A673 (cell line): ENCODE measurements at regions of chr14 and their contacts with region 1.

Region 1: DNA sequence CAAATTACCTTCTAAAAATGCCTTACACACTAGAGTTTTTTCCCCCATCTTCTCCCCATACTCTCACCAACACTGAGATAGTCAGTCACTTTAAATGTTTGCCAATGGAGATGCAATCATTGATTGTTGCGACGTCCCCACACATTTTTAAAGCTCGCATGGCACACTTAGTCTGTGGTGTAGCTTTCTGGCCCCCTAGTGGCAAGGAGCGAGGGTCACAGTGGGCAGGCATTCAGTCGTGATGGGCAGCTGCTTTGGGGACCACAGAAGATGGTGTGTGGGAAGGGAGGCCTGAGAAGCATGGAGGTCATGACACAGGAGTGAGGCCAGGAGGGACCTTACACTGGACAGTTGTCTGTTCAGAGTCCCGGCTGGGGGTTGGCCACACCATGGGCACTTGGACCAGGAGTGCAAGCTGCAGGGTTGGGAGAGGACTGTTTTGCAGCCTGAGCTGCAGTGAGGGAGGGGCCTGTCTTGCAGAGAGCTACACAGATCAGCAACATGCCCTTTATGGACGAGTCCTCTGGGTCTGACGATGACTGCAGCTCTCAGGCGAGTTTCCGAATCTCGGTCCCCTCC is 28.7 kb downstream of the PIGH start:
- DNase-seq: peak; percentile 65
- H3K4me3 ChIP-seq: no peak overlapping the region
- H3K27ac ChIP-seq: no peak overlapping the region
- H3K4me1 ChIP-seq: no peaks in the 10 kb centered on the region
- H3K27me3 ChIP-seq: no peaks in the 10 kb centered on the region
- CTCF ChIP-seq: peak; percentile 95

Region 2: DNA sequence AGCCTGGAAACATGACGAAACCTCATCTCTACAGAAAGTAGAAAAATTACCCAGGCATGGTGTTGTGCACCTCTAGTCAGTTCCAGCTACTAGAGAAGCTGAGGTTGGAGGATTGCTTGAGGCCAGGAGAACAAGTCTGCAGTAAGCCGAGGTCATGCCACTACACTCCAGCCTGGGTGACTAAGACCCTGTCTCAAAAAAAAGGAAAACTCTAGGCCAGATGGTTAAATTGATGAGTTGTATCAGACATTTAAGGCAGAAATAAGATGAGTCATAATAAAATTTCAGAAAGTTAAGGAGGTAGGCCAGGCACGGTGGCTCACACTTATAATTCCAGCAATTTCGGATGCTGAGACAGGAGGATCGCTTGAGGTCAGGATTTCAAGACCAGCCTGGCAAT is 200.5 kb before region 1 on chr14:
- CTCF ChIA-PET with region 1: no interaction called
- POLR2A ChIA-PET with region 1: no interaction called
- intact Hi-C with region 1: no loop called
- DNase-seq: no peak
- H3K4me3 ChIP-seq: no peak overlapping the region
- H3K27ac ChIP-seq: no peak overlapping the region
- H3K4me1 ChIP-seq: no peaks in the 10 kb centered on the region
- H3K27me3 ChIP-seq: no peaks in the 10 kb centered on the region
- CTCF ChIP-seq: no peak

Region 3: GRCh38 chr14:67426983-67427606 is 144.3 kb before region 1 on chr14:
- CTCF ChIA-PET with region 1: interaction called, 16 read pairs
- POLR2A ChIA-PET with region 1: no interaction called
- intact Hi-C with region 1: loop called (anchors 1 kb)
- DNase-seq: peak; percentile 87
- H3K4me3 ChIP-seq: no peak overlapping the region
- H3K27ac ChIP-seq: no peak overlapping the region
- H3K4me1 ChIP-seq: no peaks in the 10 kb centered on the region
- H3K27me3 ChIP-seq: no peaks in the 10 kb centered on the region
- CTCF ChIP-seq: peak; percentile 81

Region 4: DNA sequence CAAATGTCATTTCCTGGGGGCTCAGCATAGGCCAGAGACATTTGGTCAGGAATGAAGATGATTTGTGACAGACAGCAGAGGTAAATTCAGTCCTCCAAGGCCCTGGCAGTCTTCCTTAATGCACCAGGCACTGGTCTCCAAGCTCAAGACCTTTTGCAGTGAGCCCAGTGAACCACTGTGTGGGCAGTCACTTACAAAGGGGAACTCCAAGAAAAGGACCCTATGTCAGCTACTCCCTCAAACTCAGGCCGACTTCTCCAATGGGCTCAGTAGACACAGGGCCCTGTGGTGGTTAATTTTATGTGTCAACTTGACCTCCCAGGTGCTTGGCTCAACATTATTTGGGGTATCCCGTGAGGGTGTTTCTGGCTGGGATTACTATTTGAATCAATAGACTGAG is 130.1 kb before region 1 on chr14:
- CTCF ChIA-PET with region 1: no interaction called
- POLR2A ChIA-PET with region 1: no interaction called
- intact Hi-C with region 1: no loop called
- DNase-seq: no peak
- H3K4me3 ChIP-seq: no peak overlapping the region
- H3K27ac ChIP-seq: no peak overlapping the region
- H3K4me1 ChIP-seq: no peaks in the 10 kb centered on the region
- H3K27me3 ChIP-seq: no peaks in the 10 kb centered on the region
- CTCF ChIP-seq: no peak

Region 5: DNA sequence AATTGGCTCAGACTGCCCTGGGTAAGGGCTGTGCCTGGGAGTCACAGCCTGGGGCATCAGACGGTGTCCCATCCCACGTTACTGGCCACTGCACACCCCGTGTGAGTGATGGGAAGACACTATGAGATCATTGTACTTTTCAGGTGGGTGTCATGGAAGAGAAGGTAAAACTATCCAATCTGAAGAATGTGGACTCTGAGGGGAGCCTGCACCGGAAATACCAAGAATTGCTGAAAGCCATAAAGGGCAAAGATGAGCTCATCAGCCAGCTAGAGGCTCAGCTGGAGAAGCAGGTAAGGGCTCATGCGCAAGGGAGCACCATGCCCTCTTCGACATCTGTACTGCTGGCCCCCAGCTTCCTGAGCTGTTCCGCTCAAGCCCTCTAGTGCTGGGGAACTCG is 14.2 kb before region 1 on chr14:
- CTCF ChIA-PET with region 1: no interaction called
- POLR2A ChIA-PET with region 1: no interaction called
- intact Hi-C with region 1: no loop called
- DNase-seq: no peak
- H3K4me3 ChIP-seq: no peak overlapping the region
- H3K27ac ChIP-seq: no peak overlapping the region
- H3K4me1 ChIP-seq: no peaks in the 10 kb centered on the region
- H3K27me3 ChIP-seq: no peaks in the 10 kb centered on the region
- CTCF ChIP-seq: no peak

Region 6: GRCh38 chr14:67722293-67722692 is 150.9 kb after region 1 on chr14:
- CTCF ChIA-PET with region 1: no interaction called
- POLR2A ChIA-PET with region 1: no interaction called
- intact Hi-C with region 1: no loop called
- DNase-seq: peak; percentile 27
- H3K4me3 ChIP-seq: no peak overlapping the region
- H3K27ac ChIP-seq: no peak overlapping the region
- H3K4me1 ChIP-seq: peaks cover 3% of the 10 kb centered on the region
- H3K27me3 ChIP-seq: peaks cover 10% of the 10 kb centered on the region
- CTCF ChIP-seq: no peak